Esophagus muscularis mucosa (tissue), 4 donors: ENCODE measurements at regions of chr9 and their contacts with region 1.

Region 1: GRCh38 chr9:34376596-34377403 is at the start of gene MYORG:
- DNase-seq: peak; percentile 98
- H3K4me3 ChIP-seq: peak within 1 kb of the TSS; percentile 66 to 85 (median 80)
- H3K27ac ChIP-seq: peak within 1 kb of the TSS; percentile 79 to 88 (median 84)
- H3K4me1 ChIP-seq: peaks cover 28 to 79% (median 61%) of the 10 kb centered on the region in 4 donors
- H3K27me3 ChIP-seq: peaks cover 0 to 5% (median 0%) of the 10 kb centered on the region in 4 donors
- CTCF ChIP-seq: peak in 1 of 3 experiments; percentile 10
- EP300 ChIP-seq: no peak
- POLR2A ChIP-seq: peak; percentile 56
- total RNA-seq, gene MYORG: 7.8 to 27.2 (median 15.4) TPM

Region 2: DNA sequence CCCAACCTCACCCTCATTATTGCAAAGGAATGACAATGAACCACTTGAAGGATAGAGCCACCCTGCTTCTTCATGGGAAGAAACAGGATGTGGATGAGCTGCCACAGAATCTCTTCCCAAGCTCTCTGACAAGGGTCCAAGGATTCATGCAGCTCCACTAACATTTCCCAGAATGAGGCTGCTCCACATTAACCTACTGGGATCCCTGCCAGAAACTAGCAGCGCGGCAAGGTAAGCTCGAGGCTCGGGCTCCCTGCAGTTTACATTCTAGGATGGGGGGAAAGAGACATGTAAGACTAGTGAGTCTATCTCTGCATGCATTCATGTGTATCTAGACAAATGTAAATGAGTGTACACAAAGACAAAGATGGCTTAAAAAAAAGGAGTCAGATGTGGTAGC is 262.4 kb before region 1 on chr9:
- intact Hi-C with region 1: no loop called
- DNase-seq: no peak
- H3K4me3 ChIP-seq: no peak overlapping the region
- H3K27ac ChIP-seq: no peak overlapping the region
- H3K4me1 ChIP-seq: peaks cover 5 to 14% (median 7%) of the 10 kb centered on the region in 4 donors
- H3K27me3 ChIP-seq: no peaks in the 10 kb centered on the region
- CTCF ChIP-seq: no peak
- EP300 ChIP-seq: no peak
- POLR2A ChIP-seq: no peak

Region 3: GRCh38 chr9:34252670-34253459 is 123.9 kb before region 1 on chr9:
- intact Hi-C with region 1: loop called (anchors 5 kb)
- DNase-seq: no peak
- H3K4me3 ChIP-seq: no peak overlapping the region
- H3K27ac ChIP-seq: peak overlapping the region; percentile 70 to 86 (median 83)
- H3K4me1 ChIP-seq: peaks cover 54 to 91% (median 70%) of the 10 kb centered on the region in 4 donors
- H3K27me3 ChIP-seq: no peaks in the 10 kb centered on the region
- CTCF ChIP-seq: peak; percentile 92 to 95 (median 93)
- EP300 ChIP-seq: no peak
- POLR2A ChIP-seq: no peak

Region 4: GRCh38 chr9:34318163-34318790 is 58.5 kb before region 1 on chr9:
- intact Hi-C with region 1: no loop called
- DNase-seq: peak; percentile 31
- H3K4me3 ChIP-seq: no peak overlapping the region
- H3K27ac ChIP-seq: no peak overlapping the region
- H3K4me1 ChIP-seq: no peaks in the 10 kb centered on the region
- H3K27me3 ChIP-seq: no peaks in the 10 kb centered on the region
- CTCF ChIP-seq: no peak
- EP300 ChIP-seq: no peak
- POLR2A ChIP-seq: no peak

Region 5: GRCh38 chr9:34328987-34329832 is 47.6 kb before region 1 on chr9 and contains the starts of genes KIF24 and NUDT2:
- intact Hi-C with region 1: loop called (anchors 1 kb)
- DNase-seq: peak; percentile 99
- H3K4me3 ChIP-seq: peak within 1 kb of the TSS; percentile 70 to 81 (median 76)
- H3K27ac ChIP-seq: peak within 1 kb of the TSS; percentile 92 to 96 (median 94)
- H3K4me1 ChIP-seq: peaks cover 14 to 44% (median 38%) of the 10 kb centered on the region in 4 donors
- H3K27me3 ChIP-seq: no peaks in the 10 kb centered on the region
- CTCF ChIP-seq: no peak
- EP300 ChIP-seq: no peak
- POLR2A ChIP-seq: peak; percentile 20
- total RNA-seq, gene KIF24: 0.42 to 1.5 (median 0.62) TPM
- total RNA-seq, gene NUDT2: 15.0 to 45.3 (median 23.0) TPM